ENCODE measurements at regions of chr12 and their contacts with region 1.

Region 1: DNA sequence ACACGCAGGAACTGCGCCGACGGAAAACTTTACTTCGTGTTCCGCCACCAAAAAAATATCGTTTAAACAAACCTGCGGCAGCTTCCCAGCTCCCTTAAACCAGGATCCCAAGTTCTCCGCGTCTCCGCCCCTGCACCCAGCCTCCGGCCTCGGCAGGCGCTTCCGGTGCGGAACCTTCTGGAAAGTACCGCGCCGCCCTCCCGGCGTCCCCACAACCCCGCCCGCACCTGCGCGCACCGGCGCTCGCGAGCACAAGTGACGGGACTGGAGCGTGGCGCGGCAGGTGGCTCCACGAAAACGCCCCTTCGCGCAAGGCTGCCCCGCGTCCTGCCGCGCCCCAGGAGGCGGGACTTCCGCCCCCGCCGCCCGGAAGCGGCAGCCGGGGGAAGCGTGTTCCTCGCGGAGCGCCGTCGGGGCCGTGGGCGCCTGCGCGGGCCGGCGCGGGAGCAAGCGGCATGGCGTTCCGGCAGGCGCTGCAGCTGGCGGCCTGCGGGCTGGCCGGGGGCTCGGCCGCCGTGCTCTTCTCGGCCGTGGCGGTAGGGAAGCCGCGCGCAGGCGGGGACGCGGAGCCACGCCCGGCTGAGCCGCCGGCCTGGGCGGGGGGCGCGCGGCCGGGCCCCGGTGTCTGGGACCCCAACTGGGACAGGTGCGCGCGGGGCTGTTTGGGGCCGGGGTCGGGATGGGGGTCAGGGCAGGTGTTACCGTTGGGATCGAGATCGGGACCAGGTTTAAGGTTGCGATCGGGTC is at the start of gene PGAM5:
- DNase-seq: peak; percentile 23 to 78
- H3K4me3 ChIP-seq: peak within 1 kb of the TSS; percentile 82 to 94 (median 86)
- H3K27ac ChIP-seq: peak within 1 kb of the TSS; percentile 64; the same call in 1 of the 2 replicates
- H3K4me1 ChIP-seq: no peaks in the 10 kb centered on the region; a peak in 1 of 7 replicates
- H3K27me3 ChIP-seq: no peaks in the 10 kb centered on the region
- CTCF ChIP-seq: no peak
- EP300 ChIP-seq: no peak
- POLR2A ChIP-seq: peak in 1 of 2 experiments; percentile 44; a peak in 1 of 3 replicates
- RAD21 ChIP-seq: no peak
- total RNA-seq, gene PGAM5: 84.0 and 92.7 TPM in 2 replicates

Region 2: DNA sequence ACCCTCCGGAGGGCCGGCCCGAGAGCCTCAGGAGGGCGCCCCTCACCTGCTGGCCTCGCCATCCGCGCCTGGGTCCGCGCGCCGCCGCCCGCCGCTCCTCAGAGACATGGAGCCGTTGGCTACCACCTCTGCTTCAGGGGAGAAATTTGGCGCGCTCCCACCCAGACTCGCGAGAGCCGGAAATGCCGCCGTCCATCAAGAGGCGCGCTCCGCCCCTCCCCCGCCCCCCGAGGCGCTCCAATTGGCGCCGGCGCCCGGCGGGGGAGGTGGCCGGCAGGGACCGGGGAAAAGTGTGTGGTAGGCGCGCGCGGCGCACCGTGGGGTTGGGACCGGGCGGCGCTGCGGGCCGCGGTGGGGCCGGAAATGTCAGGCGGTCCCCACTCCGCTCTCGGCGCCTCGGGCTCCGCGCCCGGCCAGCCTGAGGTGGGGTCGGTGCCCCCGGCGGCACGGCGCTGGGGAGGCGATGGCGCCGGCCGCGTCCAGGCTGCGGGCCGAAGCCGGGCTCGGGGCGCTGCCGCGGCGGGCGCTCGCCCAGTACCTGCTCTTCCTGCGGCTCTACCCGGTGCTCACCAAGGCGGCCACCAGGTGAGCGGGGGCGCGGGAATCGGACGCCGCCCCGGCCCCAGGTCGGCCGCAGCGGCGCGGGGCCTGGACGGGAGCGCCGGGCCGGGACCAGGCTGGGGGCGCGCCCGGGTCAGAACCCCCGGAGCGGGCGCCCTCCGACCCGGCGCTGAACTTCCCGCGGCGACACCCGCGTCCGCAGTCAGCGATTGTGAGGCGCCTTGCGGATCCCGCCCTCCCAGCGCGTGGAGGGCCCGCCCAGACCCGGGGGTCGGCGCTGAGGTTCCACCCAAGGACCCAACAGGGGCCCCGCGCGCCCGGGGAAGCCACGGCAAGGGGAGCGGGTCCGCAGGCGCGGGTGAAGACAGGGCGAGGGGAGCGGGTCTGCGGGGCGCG is 23.1 kb before region 1 on chr12 and contains the starts of genes POLE and PXMP2:
- CTCF ChIA-PET with region 1: interaction called, 3 read pairs
- POLR2A ChIA-PET with region 1: interaction called, 10 read pairs
- DNase-seq: peak; percentile 76 to 94
- H3K4me3 ChIP-seq: peak within 1 kb of the TSS; percentile 59 to 88 (median 66)
- H3K27ac ChIP-seq: peak within 1 kb of the TSS; percentile 89; the same call in 1 of the 2 replicates
- H3K4me1 ChIP-seq: peaks cover 0 to 2% (median 0%) of the 10 kb centered on the region in 4 experiments; a peak in 1 of 7 replicates
- H3K27me3 ChIP-seq: peaks cover 2 to 9% (median 6%) of the 10 kb centered on the region in 4 experiments; a peak in 6 of 7 replicates
- CTCF ChIP-seq: no peak
- EP300 ChIP-seq: peak in 1 of 2 experiments; percentile 35; a peak in 1 of 3 replicates
- POLR2A ChIP-seq: peak; percentile 80 to 84
- RAD21 ChIP-seq: no peak
- total RNA-seq, gene POLE: 111 and 115 TPM in 2 replicates
- total RNA-seq, gene PXMP2: 15.1 and 17.5 TPM in 2 replicates

Region 3: DNA sequence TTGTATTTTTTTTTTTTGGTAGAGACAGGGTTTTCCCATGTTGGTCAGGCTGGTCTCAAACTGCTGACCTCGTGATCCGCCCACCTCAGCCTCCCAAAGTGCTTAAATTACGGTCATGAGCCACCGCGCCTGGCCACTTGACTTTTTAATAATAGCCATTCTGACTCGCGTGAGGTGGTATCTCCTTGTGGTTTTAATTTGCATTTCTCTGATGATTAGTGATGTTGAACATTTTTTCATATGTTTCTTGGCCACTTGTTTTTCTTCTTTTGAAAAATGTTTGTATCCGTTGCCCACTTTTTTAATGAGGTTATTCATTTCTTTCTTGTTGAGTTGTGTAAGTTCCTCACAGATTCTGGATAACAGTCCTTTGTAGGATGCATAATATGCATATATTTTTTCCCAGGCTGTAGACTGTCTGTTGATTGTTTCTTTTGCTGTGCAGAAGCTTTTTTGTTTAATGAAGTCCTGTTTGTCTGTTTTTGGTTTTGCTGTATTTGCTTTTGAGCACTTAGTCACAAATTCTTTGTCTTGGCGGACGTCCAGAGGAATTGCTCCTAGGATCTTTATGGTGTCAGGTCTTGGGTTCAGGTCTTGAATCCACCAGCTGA is 10.3 kb before region 1 on chr12:
- CTCF ChIA-PET with region 1: no interaction called
- POLR2A ChIA-PET with region 1: interaction called, 20 read pairs
- DNase-seq: no peak
- H3K4me3 ChIP-seq: no peak overlapping the region
- H3K27ac ChIP-seq: no peak overlapping the region
- H3K4me1 ChIP-seq: no peaks in the 10 kb centered on the region; a peak in 1 of 7 replicates
- H3K27me3 ChIP-seq: no peaks in the 10 kb centered on the region
- CTCF ChIP-seq: no peak
- EP300 ChIP-seq: no peak
- POLR2A ChIP-seq: no peak
- RAD21 ChIP-seq: no peak

Region 4: DNA sequence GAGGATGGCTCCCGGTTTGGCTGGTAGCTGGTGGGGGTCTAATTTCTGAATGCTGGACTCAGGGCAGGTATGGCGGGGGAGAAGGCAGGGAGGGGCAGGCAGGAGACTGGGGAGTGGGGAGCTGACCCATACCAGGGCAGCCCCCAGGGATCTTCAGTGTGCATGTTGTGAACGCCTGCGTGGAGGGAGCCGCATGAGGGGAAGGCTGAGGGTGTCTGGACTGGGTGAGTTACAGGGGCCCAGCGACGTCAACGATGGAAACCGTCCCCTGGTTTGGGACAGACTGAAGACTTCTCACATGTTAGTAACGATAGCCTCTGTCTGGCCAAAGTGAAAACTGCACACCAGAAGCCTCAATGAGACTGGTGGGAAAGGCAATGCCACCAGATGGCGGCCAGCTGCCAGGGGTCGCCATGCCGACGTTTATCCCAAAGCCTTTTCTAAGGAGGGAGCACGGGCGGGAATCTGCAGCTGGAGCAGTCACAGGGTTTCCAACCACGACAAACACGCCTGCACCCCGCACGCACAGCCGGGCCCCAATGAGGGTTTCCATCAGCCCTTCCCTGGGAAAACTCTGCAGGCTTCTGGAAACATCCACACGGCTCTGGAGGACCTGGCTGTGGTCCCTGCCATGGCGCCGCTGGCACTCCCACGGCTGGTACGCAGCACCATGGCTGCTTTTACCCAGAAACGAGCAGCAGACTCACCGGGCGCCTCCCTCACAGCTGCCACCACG is 14.1 kb after region 1 on chr12:
- CTCF ChIA-PET with region 1: no interaction called
- POLR2A ChIA-PET with region 1: interaction called, 21 read pairs
- DNase-seq: no peak
- H3K4me3 ChIP-seq: no peak overlapping the region
- H3K27ac ChIP-seq: no peak overlapping the region
- H3K4me1 ChIP-seq: no peaks in the 10 kb centered on the region
- H3K27me3 ChIP-seq: no peaks in the 10 kb centered on the region; a peak in 1 of 7 replicates
- CTCF ChIP-seq: peak in 1 of 3 experiments; percentile 2; a peak in 1 of 4 replicates
- EP300 ChIP-seq: no peak
- POLR2A ChIP-seq: no peak
- RAD21 ChIP-seq: no peak

Measured in H1 (cell line).